Left ventricle myocardium superior (tissue), 1 donor: ENCODE measurements at regions of chr5 and their contacts with region 1.

Region 1: GRCh38 chr5:14208071-14209021 is 65.2 kb downstream of the TRIO start:
- DNase-seq: no peak
- ATAC-seq: peak; percentile 23

Region 2: GRCh38 chr5:14264604-14265316 is 56.4 kb after region 1 on chr5:
- intact Hi-C with region 1: loop called (anchors 10 kb)
- DNase-seq: peak; percentile 94
- ATAC-seq: peak; percentile 92